Right ventricle myocardium inferior (tissue), 1 donor: ENCODE measurements at regions of chr9 and their contacts with region 1.

Region 1: DNA sequence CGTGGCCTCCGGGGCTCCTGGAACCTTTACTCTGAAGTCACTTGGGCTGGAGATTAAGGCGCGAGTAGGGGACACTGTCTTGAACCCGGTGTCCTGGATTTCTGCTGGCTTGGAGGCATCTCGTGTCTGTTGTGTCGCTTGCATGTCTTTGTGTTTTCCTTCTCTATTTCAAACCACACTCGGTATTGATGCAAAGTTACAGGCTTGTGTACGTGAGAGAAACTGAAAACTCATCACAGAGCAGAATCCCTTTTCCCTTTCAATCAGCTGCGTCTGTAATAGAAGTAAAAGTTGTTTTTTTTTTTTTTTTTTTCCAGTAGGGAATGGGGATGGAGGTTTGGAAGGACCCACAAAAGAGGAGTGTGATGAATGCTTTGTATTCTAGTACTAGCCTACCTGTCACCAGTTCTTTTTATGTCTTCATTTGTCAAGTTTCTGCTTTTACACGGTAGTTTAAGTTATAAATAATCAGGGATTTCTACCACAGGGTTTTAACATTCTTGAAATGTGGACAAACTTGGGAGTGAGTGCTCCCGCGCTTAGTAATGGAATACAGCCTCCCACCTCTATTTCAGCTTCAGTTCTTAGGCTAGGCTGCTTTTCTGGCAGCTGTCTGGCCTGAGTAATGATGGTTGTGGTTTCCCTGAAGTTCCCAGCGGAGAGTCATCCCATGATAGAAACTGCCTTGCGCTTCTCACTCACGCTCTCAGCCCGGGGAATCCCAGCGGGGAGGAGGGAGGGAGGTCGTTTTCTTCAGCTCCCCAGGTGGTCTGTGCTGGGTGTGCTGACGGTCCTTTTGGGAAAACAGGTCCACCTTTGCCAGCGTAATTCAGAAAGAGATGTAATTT is 763 bp downstream of the TJP2 start:
- DNase-seq: no peak
- ATAC-seq: peak; percentile 53

Region 2: GRCh38 chr9:69109152-69109551 is 65.7 kb before region 1 on chr9:
- intact Hi-C with region 1: no loop called
- DNase-seq: no peak
- ATAC-seq: no peak

Region 3: GRCh38 chr9:69121828-69122548 is 52.9 kb before region 1 on chr9:
- intact Hi-C with region 1: loop called (anchors 5 kb)
- DNase-seq: peak; percentile 85
- ATAC-seq: peak; percentile 85

Region 4: GRCh38 chr9:69145144-69145715 is 29.6 kb before region 1 on chr9:
- intact Hi-C with region 1: no loop called
- DNase-seq: no peak
- ATAC-seq: no peak

Region 5: DNA sequence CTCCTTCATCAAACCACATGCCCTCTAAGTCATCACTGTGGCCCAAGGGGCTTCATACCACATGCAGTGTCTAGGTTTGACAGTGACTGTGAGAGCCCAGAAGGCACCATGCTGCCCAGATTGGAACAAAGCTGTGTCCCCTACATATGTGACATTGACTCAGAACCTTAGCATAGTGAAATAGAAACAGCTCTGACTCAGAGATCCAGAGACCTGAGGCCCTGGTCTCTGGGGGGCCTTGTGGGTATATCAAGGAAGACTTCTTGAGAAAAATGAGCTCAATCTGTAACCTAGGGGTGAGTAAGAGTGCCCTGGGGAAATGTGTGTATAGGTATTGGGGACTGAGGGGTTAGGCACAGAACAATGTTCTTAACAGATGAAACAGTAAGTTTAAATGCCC is 143.1 kb after region 1 on chr9:
- intact Hi-C with region 1: no loop called
- DNase-seq: no peak
- ATAC-seq: no peak

Region 6: DNA sequence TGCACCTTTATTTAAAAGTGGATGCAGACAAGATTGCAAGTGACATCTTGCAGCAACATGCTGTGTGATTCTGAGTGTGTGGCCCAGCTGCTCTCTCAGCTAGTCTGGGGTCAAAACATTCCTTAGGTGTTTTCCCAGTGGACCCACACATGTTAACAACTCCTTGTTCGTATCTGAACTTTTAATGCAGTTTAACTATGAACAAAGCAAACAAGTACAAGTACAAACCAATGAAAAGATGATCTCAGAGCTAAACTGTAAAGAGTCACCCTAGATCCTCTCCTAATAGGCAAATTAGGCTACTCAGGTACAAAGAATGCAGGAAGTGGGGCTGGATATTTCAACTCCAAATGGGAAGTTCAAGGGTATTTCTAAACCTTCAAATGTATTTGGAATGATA is 258.6 kb after region 1 on chr9:
- intact Hi-C with region 1: no loop called
- DNase-seq: no peak
- ATAC-seq: no peak